Activated CD4-positive, alpha-beta T cell treated with anti-CD3 and anti-CD28 coated beads, Interleukin-2, amount 10 ng/mL, durations not matched to agents 7 days and 5 days (primary cell): ENCODE measurements at regions of chr6 and their contacts with region 1.

Region 1: DNA sequence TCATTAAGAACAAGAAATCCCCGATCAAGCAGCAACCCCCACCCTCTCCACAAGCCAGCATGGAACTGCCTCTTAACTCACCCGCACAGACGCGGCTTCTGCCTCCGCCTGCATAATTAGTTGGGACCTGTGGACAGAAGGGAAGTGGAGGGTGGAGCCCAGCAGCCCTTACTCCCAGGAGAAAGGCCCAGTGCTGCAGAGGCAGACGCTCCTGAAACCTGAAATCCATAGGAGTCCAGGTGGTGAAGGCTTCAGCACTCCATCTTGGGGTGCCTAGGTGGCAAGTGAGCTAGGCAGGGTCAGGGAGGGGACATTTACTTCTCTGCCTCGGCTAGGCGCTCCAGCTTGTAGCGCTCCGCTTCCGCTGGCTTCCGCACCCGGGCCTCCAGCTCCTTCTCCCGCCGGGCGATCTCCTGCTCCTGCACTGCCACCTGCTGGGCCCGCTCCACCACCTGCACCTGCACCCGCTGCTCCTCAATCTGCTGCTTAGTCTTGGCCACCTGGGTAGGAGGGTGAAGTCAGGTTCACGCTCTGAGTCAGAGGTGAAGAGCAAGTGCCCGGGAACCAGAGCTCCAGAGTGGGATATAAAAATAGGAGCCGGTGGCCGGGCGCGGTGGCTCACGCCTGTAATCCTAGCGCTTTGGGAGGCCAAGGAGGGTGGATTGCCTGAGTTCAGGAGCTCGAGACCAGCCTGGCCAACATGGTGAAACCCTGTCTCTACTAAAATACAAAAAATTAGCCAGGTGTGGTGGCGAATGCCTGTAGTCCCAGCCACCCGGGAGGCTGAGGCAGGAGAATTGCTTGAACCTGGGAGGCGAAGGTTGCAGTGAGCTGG is 10.7 kb downstream of the TUBB start:
- DNase-seq: peak; percentile 90
- H3K4me3 Mint-ChIP-seq: peak overlapping the region; percentile 6
- H3K27ac Mint-ChIP-seq: peak overlapping the region; percentile 22
- H3K4me1 Mint-ChIP-seq: peaks cover 61% of the 10 kb centered on the region
- H3K27me3 Mint-ChIP-seq: no peaks in the 10 kb centered on the region

Region 2: DNA sequence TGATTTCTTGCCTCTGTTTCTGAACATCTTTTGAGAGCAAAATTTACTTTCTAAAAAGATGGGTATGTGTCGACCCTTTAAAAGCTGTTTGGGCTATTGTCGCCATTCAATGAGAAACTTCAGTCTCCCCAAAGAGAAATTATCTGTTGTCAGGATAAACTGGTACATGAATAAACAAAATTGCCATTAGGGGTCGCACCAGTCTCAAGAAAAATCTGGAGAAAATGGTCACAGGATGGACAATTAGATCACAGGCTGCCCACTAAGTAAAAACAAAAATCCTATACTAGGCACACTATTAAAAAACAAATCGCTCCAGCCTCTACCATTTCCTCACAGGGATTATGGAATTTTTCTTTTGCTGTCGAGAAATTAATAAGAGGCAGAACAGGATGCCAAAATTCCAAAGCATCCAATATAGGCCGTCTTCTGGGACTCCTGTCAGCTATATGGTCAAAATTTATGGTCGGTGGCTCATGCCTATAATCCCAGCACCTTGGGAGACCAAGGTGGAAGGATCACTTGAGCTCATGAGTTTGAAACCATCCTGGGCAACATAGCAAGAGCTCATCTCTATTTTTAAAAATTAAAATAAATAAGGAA is 247.0 kb before region 1 on chr6:
- CTCF ChIA-PET with region 1: interaction called, 12 read pairs
- POLR2A ChIA-PET with region 1: no interaction called
- DNase-seq: peak; percentile 62
- H3K4me3 Mint-ChIP-seq: no peak overlapping the region
- H3K27ac Mint-ChIP-seq: no peak overlapping the region
- H3K4me1 Mint-ChIP-seq: peaks cover 33% of the 10 kb centered on the region
- H3K27me3 Mint-ChIP-seq: peaks cover 43% of the 10 kb centered on the region

Region 3: GRCh38 chr6:30616811-30617564 is 113.8 kb before region 1 on chr6 and contains the start of gene PPP1R10:
- CTCF ChIA-PET with region 1: interaction called, 18 read pairs
- POLR2A ChIA-PET with region 1: no interaction called
- DNase-seq: peak; percentile 100
- H3K4me3 Mint-ChIP-seq: peak within 1 kb of the TSS; percentile 98
- H3K27ac Mint-ChIP-seq: peak within 1 kb of the TSS; percentile 100
- H3K4me1 Mint-ChIP-seq: peaks cover 45% of the 10 kb centered on the region
- H3K27me3 Mint-ChIP-seq: peaks cover 2% of the 10 kb centered on the region
- total RNA-seq, gene PPP1R10: 99.1 to 117 TPM

Region 4: DNA sequence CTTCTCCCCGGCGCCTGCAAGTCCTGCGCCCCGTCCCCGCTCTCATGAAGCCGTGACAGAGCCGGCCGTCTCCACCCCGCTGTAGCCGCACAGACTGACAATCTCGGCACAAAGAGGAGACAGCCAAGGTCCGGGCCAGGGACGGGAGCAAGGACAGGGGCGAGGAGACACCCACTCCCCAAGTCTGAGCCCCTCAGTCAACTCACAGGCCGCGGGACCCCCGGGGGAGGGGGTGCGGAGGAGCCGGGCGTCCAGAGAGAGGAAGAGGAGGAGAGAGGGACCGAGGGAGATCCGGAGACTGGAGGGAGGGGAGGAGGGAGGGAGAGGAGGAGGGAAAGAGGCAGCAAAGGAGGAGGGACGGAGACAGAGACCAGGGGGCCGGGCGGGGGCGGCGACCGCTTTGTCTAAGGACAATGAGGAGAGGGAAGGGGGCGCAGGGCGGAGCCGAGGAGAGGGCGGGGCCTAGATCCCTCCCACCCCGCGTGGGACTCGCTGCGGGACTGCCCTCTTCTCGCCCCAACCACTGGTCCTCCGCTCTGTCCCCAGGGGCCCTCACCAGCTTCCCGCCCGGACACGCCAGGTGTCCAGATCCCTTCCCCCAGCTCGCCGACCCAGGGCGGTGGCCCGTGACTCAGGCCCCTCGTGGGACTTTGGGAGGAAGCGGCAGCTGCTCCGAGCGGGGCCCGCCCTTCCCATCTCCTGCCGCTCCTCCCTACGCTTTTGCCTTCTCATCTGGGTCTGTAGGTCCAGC is 43.7 kb before region 1 on chr6:
- CTCF ChIA-PET with region 1: interaction called, 476 read pairs
- POLR2A ChIA-PET with region 1: interaction called, 5 read pairs
- DNase-seq: peak; percentile 87
- H3K4me3 Mint-ChIP-seq: peak overlapping the region; percentile 100
- H3K27ac Mint-ChIP-seq: peak overlapping the region; percentile 95
- H3K4me1 Mint-ChIP-seq: peaks cover 41% of the 10 kb centered on the region
- H3K27me3 Mint-ChIP-seq: no peaks in the 10 kb centered on the region

Region 5: GRCh38 chr6:30882759-30883684 is 152.2 kb after region 1 on chr6:
- CTCF ChIA-PET with region 1: interaction called, 12 read pairs
- POLR2A ChIA-PET with region 1: no interaction called
- DNase-seq: no peak
- H3K4me3 Mint-ChIP-seq: peak overlapping the region; percentile 70
- H3K27ac Mint-ChIP-seq: peak overlapping the region; percentile 70
- H3K4me1 Mint-ChIP-seq: peaks cover 31% of the 10 kb centered on the region
- H3K27me3 Mint-ChIP-seq: peaks cover 20% of the 10 kb centered on the region